ENCODE measurements at regions of chr7 and their contacts with region 1.

Region 1: DNA sequence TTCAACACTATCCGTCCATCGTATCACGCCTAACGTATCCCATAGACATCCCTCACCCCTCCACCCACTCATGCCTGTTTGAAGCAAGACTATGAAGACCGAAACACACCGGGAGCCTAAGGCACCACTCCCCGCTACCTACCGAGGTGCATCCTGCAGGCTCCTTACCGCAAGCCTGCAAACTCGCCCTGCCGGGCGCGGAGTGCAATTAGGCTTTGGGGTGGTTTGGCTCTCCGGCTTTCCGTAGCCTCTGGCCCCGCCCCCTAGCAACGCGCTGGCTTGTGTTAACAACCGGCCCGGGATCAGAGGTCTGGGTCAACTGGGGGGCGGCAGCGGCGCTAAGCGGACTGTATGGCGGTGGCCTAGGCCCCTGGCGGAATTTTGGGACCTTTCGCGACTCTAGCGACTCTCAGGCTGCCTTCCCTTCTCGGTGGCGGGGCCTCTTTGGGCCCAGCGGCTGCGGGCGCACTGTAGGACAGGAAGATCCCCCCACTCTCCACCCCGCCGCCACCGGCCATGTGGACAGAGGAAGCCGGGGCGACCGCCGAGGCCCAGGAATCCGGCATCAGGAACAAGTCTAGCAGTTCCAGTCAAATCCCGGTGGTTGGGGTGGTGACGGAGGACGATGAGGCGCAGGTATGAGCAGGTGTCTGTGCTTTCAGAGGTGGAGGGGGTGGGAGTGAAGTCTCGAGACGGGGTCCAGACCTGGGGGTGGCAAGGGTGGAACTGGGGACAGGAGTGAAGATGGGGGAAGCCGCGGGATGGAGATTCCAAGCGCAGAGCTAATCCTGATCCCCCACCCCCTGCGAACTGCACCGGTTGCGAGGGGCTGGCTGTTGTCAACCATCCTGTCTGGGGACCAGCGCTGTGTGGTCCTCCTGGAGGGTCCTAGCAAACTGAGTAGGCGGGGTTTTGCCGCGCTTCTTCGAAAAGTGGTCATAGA is at the start of gene CFAP69:
- DNase-seq: peak; percentile 91
- H3K4me3 Mint-ChIP-seq: peak within 1 kb of the TSS; percentile 97
- H3K27ac Mint-ChIP-seq: no peak within 1 kb of the TSS
- H3K4me1 Mint-ChIP-seq: peaks cover 17% of the 10 kb centered on the region
- H3K27me3 Mint-ChIP-seq: peaks cover 24% of the 10 kb centered on the region
- total RNA-seq, gene CFAP69: 0.25 to 0.31 TPM

Region 2: DNA sequence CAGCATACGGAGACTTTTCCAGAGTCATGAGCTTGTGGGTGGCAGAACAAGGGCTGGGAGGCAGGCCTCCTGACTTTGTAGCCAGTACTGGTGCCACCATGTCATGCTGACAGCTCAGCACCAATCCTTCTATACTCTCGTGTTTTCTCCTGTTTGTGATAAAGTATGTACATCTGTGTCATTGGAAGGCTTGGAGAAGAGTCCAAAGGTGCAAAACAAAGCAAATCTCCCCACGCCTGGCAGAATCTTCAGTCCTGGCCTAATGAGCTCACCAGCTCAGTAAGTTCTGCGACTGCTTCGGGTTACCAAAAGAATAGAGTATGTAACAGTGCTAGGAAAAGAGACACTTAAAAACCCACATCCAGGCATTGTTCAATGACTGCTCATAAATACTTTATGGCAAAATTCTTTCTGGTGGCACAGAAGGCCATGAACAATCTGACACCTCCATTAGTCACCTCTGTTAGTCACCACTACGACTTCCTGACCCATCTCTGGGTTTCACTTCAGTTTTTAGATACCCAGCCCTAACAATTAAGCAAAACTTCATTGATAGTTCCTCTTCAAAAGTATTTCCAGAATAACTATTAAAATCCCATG is 66.4 kb before region 1 on chr7:
- CTCF ChIA-PET with region 1: no interaction called
- intact Hi-C with region 1: loop called (anchors 1 kb)
- DNase-seq: peak; percentile 63
- H3K4me3 Mint-ChIP-seq: peak overlapping the region; percentile 17
- H3K27ac Mint-ChIP-seq: peak overlapping the region; percentile 94
- H3K4me1 Mint-ChIP-seq: peaks cover 35% of the 10 kb centered on the region
- H3K27me3 Mint-ChIP-seq: peaks cover 8% of the 10 kb centered on the region

Region 3: DNA sequence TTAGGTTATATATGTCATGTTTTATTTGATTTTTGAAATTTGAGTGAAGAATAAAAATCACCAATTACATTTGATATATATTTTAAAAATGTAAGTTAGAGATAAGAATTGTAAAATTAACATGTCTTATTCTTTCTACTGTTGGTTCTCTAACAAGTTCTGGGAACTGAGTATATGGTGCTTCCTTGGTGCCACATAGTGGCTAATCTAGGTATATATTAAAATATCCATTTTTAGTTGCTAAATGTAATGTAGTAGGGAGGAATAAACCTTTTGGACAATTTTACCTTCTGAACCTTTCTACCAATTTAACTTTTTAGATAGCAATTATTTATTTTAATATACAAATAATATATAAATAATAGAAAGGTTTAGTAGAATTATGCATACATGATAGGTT is 17.3 kb after region 1 on chr7:
- CTCF ChIA-PET with region 1: interaction called, 3 read pairs
- intact Hi-C with region 1: loop called (anchors 1 kb)
- DNase-seq: no peak
- H3K4me3 Mint-ChIP-seq: no peak overlapping the region
- H3K27ac Mint-ChIP-seq: no peak overlapping the region
- H3K4me1 Mint-ChIP-seq: no peaks in the 10 kb centered on the region
- H3K27me3 Mint-ChIP-seq: peaks cover 3% of the 10 kb centered on the region

Region 4: DNA sequence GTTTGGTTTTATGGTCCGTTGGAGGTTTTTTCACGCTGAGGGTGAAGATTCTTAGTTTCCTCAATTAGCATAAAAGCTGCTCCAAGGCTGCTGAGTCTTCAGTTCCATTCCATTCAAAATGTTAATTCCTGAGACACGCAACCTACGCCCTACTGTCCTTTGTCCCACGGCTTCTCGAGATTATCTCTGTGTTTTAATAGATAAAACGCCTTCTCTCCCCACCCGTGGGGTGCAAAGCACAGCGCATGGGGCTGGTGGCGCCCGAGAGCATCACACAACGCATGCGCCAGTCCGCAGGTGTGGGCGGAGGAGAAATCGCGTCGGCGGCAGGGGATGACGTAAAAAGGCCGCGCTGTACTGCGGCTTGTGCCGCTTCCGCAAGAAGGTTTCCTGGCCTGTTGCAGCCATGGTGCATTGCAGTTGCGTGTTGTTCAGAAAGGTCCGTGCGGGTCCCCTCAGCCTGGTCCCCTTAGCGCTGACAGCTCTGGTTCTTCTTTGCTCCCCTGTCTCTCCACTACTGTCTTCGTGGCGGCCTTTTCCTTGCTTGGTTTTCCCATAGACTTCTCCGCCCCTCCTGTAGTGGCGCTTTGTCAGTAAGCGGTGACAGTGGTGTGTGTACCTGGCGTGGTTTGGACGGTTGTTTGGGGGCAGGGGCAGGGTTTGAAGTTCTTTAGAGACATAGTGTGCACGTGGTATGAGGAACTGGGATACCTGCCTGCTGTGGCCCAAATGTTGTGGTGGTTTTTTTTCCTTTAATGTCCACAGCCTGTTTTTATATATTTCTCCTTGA is 101.4 kb after region 1 on chr7 and contains the start of gene GTPBP10:
- CTCF ChIA-PET with region 1: no interaction called
- intact Hi-C with region 1: loop called (anchors 1 kb)
- DNase-seq: peak; percentile 96
- H3K4me3 Mint-ChIP-seq: peak within 1 kb of the TSS; percentile 94
- H3K27ac Mint-ChIP-seq: peak within 1 kb of the TSS; percentile 96
- H3K4me1 Mint-ChIP-seq: peaks cover 34% of the 10 kb centered on the region
- H3K27me3 Mint-ChIP-seq: no peaks in the 10 kb centered on the region
- total RNA-seq, gene GTPBP10: 35.8 to 39.3 TPM

Region 5: GRCh38 chr7:91264046-91264923 is 1019.1 kb after region 1 on chr7 and contains the start of gene FZD1:
- CTCF ChIA-PET with region 1: no interaction called
- intact Hi-C with region 1: loop called (anchors 10 kb)
- DNase-seq: peak; percentile 85
- H3K4me3 Mint-ChIP-seq: peak within 1 kb of the TSS; percentile 82
- H3K27ac Mint-ChIP-seq: no peak within 1 kb of the TSS
- H3K4me1 Mint-ChIP-seq: peaks cover 8% of the 10 kb centered on the region
- H3K27me3 Mint-ChIP-seq: peaks cover 53% of the 10 kb centered on the region
- total RNA-seq, gene FZD1: 0.29 to 0.30 TPM